PC-3 (cell line): ENCODE measurements at regions of chr15 and their contacts with region 1.

Region 1: GRCh38 chr15:89740137-89740536 is 10.9 kb downstream of the MESP1 start:
- DNase-seq: peak; percentile 91
- ATAC-seq: peak; percentile 87
- H3K4me3 ChIP-seq: no peak overlapping the region; the same call in 1 of the 2 replicates
- H3K27ac ChIP-seq: no peak overlapping the region
- H3K4me1 ChIP-seq: 0 out of 2 replicates have a peak, but pooled peaks cover 3% of the 10 kb centered on the region
- H3K27me3 ChIP-seq: no peaks in the 10 kb centered on the region
- CTCF ChIP-seq: peak; percentile 85

Region 2: GRCh38 chr15:89654847-89655805 is 85.0 kb before region 1 on chr15 and contains the start of gene KIF7:
- CTCF ChIA-PET with region 1: no interaction called
- POLR2A ChIA-PET with region 1: no interaction called
- intact Hi-C with region 1: loop called (anchors 5 kb)
- DNase-seq: peak; percentile 62
- ATAC-seq: peak; percentile 74
- H3K4me3 ChIP-seq: peak within 1 kb of the TSS; percentile 95
- H3K27ac ChIP-seq: peak within 1 kb of the TSS; percentile 16; the same call in 1 of the 2 replicates
- H3K4me1 ChIP-seq: peaks cover 20% of the 10 kb centered on the region; the same call in 1 of the 2 replicates
- H3K27me3 ChIP-seq: no peaks in the 10 kb centered on the region
- CTCF ChIP-seq: no peak
- total RNA-seq, gene KIF7: 18.8 and 27.2 TPM in 2 replicates

Region 3: GRCh38 chr15:90086868-90087268 is 346.7 kb after region 1 on chr15:
- CTCF ChIA-PET with region 1: no interaction called
- POLR2A ChIA-PET with region 1: no interaction called
- intact Hi-C with region 1: loop called (anchors 5 kb)
- DNase-seq: peak; percentile 68
- ATAC-seq: peak; percentile 80
- H3K4me3 ChIP-seq: no peak overlapping the region
- H3K27ac ChIP-seq: no peak overlapping the region
- H3K4me1 ChIP-seq: no peaks in the 10 kb centered on the region
- H3K27me3 ChIP-seq: no peaks in the 10 kb centered on the region
- CTCF ChIP-seq: peak; percentile 90